HepG2 (cell line): ENCODE measurements at regions of chr12 and their contacts with region 1.

Region 1: GRCh38 chr12:108457006-108457733 is 57.9 kb upstream of the FICD start:
- DNase-seq: peak; percentile 69
- ATAC-seq: peak; percentile 95
- H3K4me3 ChIP-seq: no peak overlapping the region
- H3K27ac ChIP-seq: no peak overlapping the region
- H3K4me1 ChIP-seq: no peaks in the 10 kb centered on the region
- H3K27me3 ChIP-seq: no peaks in the 10 kb centered on the region
- CTCF ChIP-seq: peak; percentile 80
- EP300 ChIP-seq: no peak
- POLR2A ChIP-seq: no peak
- RAD21 ChIP-seq: peak; percentile 79

Region 2: DNA sequence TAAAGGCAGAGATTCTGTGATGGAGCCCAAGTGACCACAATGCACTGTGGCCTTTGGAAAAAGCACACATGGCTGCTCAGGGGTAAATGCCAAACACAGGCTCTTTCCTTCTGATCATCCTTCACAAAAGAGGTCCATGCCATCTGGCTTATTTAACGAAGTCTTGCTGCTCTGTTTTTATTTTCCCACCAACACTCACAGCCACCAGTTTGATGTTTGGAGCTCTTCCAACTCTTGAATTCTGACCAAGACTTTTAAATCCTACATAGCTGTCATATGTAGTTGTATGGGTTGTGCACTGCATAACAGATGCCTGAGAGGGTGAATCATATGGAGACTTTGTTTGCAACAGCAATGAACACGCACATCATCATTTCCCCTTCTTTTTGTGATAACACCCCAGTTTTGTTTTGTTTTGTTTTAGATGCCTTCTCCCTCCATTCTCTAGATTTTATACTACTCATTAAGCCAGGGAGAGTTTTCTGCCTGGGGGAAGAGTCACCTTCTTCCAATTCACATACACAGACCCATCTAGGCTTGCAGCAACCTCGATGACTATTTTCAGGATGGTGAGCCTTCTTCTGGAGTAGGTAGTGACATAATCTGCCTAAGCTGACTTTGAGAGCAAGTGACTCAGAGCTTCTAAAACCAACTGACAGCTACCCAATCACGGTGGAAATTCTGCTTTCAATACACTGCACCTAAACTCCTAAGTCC is 473.3 kb before region 1 on chr12:
- CTCF ChIA-PET with region 1: no interaction called
- POLR2A ChIA-PET with region 1: no interaction called
- in situ Hi-C with region 1: no loop called
- intact Hi-C with region 1: no loop called
- DNase-seq: no peak
- ATAC-seq: no peak
- H3K4me3 ChIP-seq: no peak overlapping the region
- H3K27ac ChIP-seq: no peak overlapping the region
- H3K4me1 ChIP-seq: no peaks in the 10 kb centered on the region
- H3K27me3 ChIP-seq: peaks cover 0 to 3% of the 10 kb centered on the region in 2 experiments; a peak in 1 of 5 replicates
- CTCF ChIP-seq: no peak
- EP300 ChIP-seq: no peak
- POLR2A ChIP-seq: no peak
- RAD21 ChIP-seq: no peak

Region 3: DNA sequence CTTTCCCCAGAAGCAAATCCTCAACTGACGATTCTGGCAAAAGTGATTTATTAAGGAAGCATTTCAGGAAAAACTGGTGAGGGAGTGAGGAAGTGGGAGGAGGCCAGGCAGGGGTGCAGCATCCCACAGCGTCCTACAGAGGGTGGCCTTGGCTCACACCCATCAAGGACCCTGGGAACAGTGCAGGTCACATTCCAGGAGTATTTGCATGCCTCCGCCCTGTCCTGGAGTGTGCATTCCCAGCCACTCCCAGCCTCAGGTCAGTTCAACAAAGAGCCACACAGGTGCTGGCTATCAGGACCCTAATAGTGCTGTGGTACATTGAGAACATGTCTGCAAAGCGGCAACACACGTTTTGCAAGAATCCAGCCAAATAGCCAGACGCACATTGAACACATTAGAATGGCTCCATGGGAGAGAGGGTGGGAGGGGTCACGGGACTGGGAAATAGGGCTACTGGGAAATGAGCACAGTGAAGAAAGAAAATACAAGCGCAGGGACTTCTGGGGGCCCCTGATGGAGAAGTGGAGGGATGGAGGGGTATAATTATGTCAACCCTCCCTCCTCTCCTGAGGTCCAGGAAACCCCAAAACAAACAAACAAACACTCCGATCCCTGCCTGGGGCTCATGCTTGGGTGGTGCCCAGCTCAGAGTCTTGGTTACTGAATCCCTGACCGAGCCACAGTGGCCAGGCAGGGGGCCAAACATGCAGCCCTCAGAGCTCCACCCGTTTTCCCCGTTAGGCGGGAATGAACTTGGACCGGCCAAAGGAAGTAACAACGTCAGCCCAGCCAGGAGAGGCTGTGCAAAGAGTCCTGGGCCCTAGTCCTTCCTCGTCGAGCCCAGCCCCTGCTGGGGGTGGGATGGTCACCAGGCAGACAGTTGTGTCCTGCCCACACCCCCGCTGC is 154.5 kb before region 1 on chr12:
- CTCF ChIA-PET with region 1: interaction called, 20 read pairs
- POLR2A ChIA-PET with region 1: no interaction called
- in situ Hi-C with region 1: loop called (anchors 5 kb)
- intact Hi-C with region 1: loop called (anchors 1 kb)
- DNase-seq: peak; percentile 84
- ATAC-seq: peak; percentile 96
- H3K4me3 ChIP-seq: peak overlapping the region in 1 of 3 experiments; percentile 25; a peak in 1 of 6 replicates
- H3K27ac ChIP-seq: no peak overlapping the region
- H3K4me1 ChIP-seq: peaks cover 58% of the 10 kb centered on the region
- H3K27me3 ChIP-seq: peaks cover 2 to 28% of the 10 kb centered on the region in 2 experiments; a peak in 3 of 5 replicates
- CTCF ChIP-seq: peak; percentile 88
- EP300 ChIP-seq: no peak
- POLR2A ChIP-seq: no peak
- RAD21 ChIP-seq: peak; percentile 92

Region 4: GRCh38 chr12:108838194-108839017 is 381.2 kb after region 1 on chr12:
- CTCF ChIA-PET with region 1: no interaction called
- POLR2A ChIA-PET with region 1: no interaction called
- in situ Hi-C with region 1: no loop called
- intact Hi-C with region 1: no loop called
- DNase-seq: peak; percentile 80
- ATAC-seq: peak; percentile 77
- H3K4me3 ChIP-seq: no peak overlapping the region
- H3K27ac ChIP-seq: peak overlapping the region; percentile 54
- H3K4me1 ChIP-seq: peaks cover 27% of the 10 kb centered on the region
- H3K27me3 ChIP-seq: no peaks in the 10 kb centered on the region
- CTCF ChIP-seq: no peak
- EP300 ChIP-seq: no peak
- POLR2A ChIP-seq: no peak
- RAD21 ChIP-seq: no peak